ENCODE measurements at regions of chr14 and their contacts with region 1.

Region 1: DNA sequence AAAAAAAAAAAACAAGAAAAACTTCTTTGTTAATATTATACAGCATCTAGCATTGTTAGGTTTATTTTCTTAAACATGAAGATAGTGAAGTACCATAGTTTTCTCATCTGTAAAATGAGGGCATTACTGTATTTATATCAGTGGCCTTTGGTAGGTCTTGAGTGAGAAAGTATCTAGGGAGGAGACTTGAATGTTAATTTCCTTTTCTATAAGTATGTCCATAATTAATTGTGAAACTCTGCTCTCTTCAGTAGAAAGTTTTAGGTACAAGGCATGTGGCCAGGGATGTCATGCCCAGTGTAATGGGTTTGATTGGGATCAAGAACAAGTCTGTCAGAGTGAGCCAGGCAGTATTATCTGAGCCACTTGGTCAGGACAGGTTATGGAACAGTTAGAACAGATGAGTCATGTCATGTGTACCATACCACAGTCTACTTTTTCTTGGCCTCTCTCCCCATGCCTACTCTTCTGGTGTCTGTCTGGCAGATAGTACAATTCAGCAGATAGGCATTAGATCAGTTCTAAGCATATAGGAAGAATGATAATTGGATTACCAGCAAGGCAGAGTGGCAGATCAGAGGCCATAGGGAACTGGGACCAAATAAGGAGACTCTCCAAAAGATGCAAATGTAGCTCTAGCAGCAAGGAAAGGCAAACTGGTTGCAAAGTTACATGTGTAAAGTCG is 30.4 kb downstream of the FBXO34 start:
- DNase-seq: no peak
- ATAC-seq: peak; percentile 71
- H3K4me3 ChIP-seq: no peak overlapping the region
- H3K27ac ChIP-seq: no peak overlapping the region; the same call in 1 of the 2 replicates
- H3K4me1 ChIP-seq: peaks cover 43% of the 10 kb centered on the region
- H3K27me3 ChIP-seq: no peaks in the 10 kb centered on the region
- CTCF ChIP-seq: no peak
- EP300 ChIP-seq: no peak
- POLR2A ChIP-seq: no peak
- RAD21 ChIP-seq: no peak

Region 2: DNA sequence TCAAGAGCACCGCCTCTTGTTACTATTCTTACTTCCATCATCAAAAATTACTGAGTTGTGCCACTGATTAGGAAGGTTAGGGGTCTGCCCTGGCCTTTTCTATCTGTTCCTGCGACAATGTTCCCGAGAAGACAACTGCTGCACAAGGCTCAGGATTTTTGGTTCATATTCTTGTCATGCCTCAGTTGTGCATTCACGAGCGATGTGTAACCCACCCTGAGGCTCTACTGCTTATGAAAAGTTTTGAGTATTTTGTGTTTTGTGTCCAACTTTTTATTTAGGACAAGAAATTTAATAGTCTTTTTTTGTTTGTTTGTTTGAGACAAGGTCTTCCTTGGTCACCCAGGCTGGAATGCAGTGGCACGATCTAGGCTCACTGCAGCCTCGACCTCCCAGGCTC is 195.6 kb before region 1 on chr14:
- CTCF ChIA-PET with region 1: no interaction called
- POLR2A ChIA-PET with region 1: no interaction called
- RAD21 ChIA-PET with region 1: no interaction called
- SMC1A ChIA-PET with region 1: no interaction called
- in situ Hi-C with region 1: no loop called
- intact Hi-C with region 1: no loop called
- DNase-seq: no peak
- ATAC-seq: no peak
- H3K4me3 ChIP-seq: no peak overlapping the region
- H3K27ac ChIP-seq: no peak overlapping the region
- H3K4me1 ChIP-seq: peaks cover 37% of the 10 kb centered on the region
- H3K27me3 ChIP-seq: no peaks in the 10 kb centered on the region
- CTCF ChIP-seq: no peak
- EP300 ChIP-seq: no peak
- POLR2A ChIP-seq: no peak
- RAD21 ChIP-seq: no peak

Region 3: DNA sequence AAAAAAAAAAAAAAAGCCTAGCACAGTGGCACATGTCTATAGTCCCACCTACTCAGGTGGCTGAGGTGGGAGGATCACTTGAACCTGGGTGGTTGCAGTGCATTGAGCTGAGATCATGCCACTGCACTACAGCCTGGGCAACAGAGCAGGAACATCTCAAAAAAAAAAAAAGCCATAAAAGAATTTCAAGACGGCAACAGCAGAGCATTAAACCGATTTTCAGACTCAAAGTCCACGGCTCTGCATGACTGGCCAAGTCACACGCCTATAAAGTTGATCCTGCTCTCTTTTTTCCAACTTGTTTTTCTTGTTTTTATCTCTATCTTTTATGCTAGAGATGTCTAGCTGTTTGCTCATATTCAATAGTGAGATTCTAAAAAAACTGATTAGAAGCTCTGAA is 15.0 kb after region 1 on chr14:
- CTCF ChIA-PET with region 1: interaction called, 3 read pairs
- POLR2A ChIA-PET with region 1: no interaction called
- RAD21 ChIA-PET with region 1: no interaction called
- SMC1A ChIA-PET with region 1: interaction called, 15 read pairs
- in situ Hi-C with region 1: no loop called
- intact Hi-C with region 1: no loop called
- DNase-seq: no peak
- ATAC-seq: no peak
- H3K4me3 ChIP-seq: no peak overlapping the region
- H3K27ac ChIP-seq: no peak overlapping the region
- H3K4me1 ChIP-seq: no peaks in the 10 kb centered on the region
- H3K27me3 ChIP-seq: no peaks in the 10 kb centered on the region
- CTCF ChIP-seq: no peak
- EP300 ChIP-seq: no peak
- POLR2A ChIP-seq: no peak
- RAD21 ChIP-seq: no peak

Measured in GM12878 (cell line).